Activated CD4-positive, alpha-beta memory T cell treated with anti-CD3 and anti-CD28 coated beads for 36 hours (primary cell): ENCODE measurements at regions of chr12 and their contacts with region 1.

Region 1: GRCh38 chr12:89040146-89040964 is 311.9 kb downstream of the DUSP6 start:
- DNase-seq: peak; percentile 93
- H3K4me3 Mint-ChIP-seq: peak overlapping the region; percentile 18
- H3K27ac Mint-ChIP-seq: peak overlapping the region; percentile 98
- H3K4me1 Mint-ChIP-seq: peaks cover 57% of the 10 kb centered on the region
- H3K27me3 Mint-ChIP-seq: peaks cover 1% of the 10 kb centered on the region

Region 2: GRCh38 chr12:88793096-88793495 is 247.3 kb before region 1 on chr12:
- CTCF ChIA-PET with region 1: no interaction called
- POLR2A ChIA-PET with region 1: no interaction called
- intact Hi-C with region 1: no loop called
- DNase-seq: no peak
- H3K4me3 Mint-ChIP-seq: no peak overlapping the region
- H3K27ac Mint-ChIP-seq: no peak overlapping the region
- H3K4me1 Mint-ChIP-seq: no peaks in the 10 kb centered on the region
- H3K27me3 Mint-ChIP-seq: no peaks in the 10 kb centered on the region

Region 3: GRCh38 chr12:89029961-89030360 is 10.4 kb before region 1 on chr12:
- CTCF ChIA-PET with region 1: interaction called, 3 read pairs
- POLR2A ChIA-PET with region 1: interaction called, 4 read pairs
- intact Hi-C with region 1: loop called (anchors 1 kb)
- DNase-seq: no peak
- H3K4me3 Mint-ChIP-seq: no peak overlapping the region
- H3K27ac Mint-ChIP-seq: no peak overlapping the region
- H3K4me1 Mint-ChIP-seq: peaks cover 3% of the 10 kb centered on the region
- H3K27me3 Mint-ChIP-seq: peaks cover 4% of the 10 kb centered on the region

Region 4: DNA sequence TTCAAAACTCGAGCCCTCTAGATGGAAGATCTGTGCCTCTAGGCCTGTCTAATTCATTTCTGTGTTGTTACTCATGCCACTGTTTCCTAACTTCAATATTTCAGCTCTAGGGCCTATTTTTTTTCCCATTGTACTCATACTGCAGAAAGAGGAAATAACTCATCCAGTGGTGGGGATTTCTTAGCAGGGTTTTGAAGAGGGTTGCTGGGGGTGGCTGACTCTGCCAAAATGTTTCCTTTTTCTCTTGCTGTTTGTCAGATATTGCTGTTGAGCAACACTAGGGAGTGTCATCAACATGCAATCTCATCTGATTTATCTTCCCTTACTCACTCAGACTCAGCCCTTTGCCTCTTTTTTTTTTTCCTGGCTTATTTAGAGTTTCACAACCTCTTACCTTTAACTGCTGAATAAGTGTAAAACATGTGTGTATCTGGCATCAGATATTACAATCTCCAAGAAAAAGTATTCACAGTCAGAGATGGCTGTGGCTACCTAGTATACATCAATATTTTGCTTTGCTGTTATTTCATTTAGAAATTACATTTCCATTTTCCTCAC is 122.4 kb after region 1 on chr12:
- CTCF ChIA-PET with region 1: no interaction called
- POLR2A ChIA-PET with region 1: interaction called, 3 read pairs
- intact Hi-C with region 1: loop called (anchors 1 kb)
- DNase-seq: peak; percentile 90
- H3K4me3 Mint-ChIP-seq: no peak overlapping the region
- H3K27ac Mint-ChIP-seq: no peak overlapping the region
- H3K4me1 Mint-ChIP-seq: peaks cover 13% of the 10 kb centered on the region
- H3K27me3 Mint-ChIP-seq: no peaks in the 10 kb centered on the region

Region 5: DNA sequence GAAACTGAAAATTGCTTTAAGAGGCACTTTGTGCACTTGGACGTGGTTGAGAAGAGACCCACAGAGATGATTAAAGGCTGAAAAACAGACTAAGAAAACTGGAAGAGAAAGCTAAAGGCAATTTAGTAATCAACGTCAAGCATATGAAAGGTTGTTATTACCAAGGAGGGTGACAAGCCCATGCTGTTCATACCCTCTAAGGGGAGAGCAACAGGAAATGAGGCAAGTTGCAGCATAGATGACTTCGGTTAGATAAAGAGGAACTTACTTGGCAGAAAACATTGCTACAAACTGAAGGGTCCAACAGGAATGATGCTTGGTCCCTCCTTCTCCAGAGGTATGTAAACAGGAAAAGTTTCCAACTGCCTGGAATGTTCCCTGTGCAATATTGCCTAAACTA is 204.2 kb after region 1 on chr12:
- CTCF ChIA-PET with region 1: interaction called, 12 read pairs
- POLR2A ChIA-PET with region 1: interaction called, 28 read pairs
- intact Hi-C with region 1: loop called (anchors 1 kb)
- DNase-seq: peak; percentile 40
- H3K4me3 Mint-ChIP-seq: peak overlapping the region; percentile 25
- H3K27ac Mint-ChIP-seq: peak overlapping the region; percentile 86
- H3K4me1 Mint-ChIP-seq: peaks cover 39% of the 10 kb centered on the region
- H3K27me3 Mint-ChIP-seq: no peaks in the 10 kb centered on the region

Region 6: GRCh38 chr12:89470741-89471509 is 430.6 kb after region 1 on chr12:
- CTCF ChIA-PET with region 1: interaction called, 9 read pairs
- POLR2A ChIA-PET with region 1: interaction called, 3 read pairs
- intact Hi-C with region 1: loop called (anchors 1 kb)
- DNase-seq: no peak
- H3K4me3 Mint-ChIP-seq: no peak overlapping the region
- H3K27ac Mint-ChIP-seq: peak overlapping the region; percentile 64
- H3K4me1 Mint-ChIP-seq: peaks cover 58% of the 10 kb centered on the region
- H3K27me3 Mint-ChIP-seq: no peaks in the 10 kb centered on the region

Region 7: DNA sequence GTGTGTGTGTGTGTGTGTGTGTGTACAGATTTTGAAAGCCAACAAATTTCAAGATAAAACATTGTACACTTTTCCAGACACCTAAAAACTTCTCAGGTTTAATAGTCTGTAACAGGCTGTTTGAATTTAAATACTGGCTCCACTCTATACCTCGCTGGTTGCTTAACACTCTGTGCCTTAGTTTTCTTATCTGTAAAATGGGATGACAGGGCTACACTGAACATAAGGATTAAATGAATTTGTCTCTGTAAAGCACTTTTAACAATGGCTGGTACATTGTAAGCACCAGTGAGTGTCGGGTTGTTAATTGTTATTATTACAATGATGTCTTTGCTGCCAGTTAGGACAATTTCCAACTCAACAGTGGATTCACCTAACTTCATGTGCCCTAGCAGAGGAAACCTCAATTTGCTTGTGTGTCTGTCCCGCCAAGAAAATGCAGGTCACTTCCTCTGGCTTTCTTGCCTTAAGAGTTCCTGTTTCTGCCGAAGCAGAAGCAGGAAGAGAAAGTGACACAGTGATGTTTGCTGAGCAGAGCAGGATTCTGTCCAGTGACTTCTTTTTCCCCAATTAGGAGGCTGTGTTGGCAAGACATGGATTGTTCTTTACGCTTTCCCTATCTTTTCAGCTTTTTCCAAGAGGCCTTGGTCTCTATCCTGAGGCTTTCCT is 822.3 kb after region 1 on chr12:
- CTCF ChIA-PET with region 1: no interaction called
- POLR2A ChIA-PET with region 1: no interaction called
- intact Hi-C with region 1: loop called (anchors 5 kb)
- DNase-seq: peak; percentile 57
- H3K4me3 Mint-ChIP-seq: peak overlapping the region; percentile 66
- H3K27ac Mint-ChIP-seq: peak overlapping the region; percentile 95
- H3K4me1 Mint-ChIP-seq: peaks cover 67% of the 10 kb centered on the region
- H3K27me3 Mint-ChIP-seq: no peaks in the 10 kb centered on the region